ENCODE measurements at regions of chr4 and their contacts with region 1.

Region 1: DNA sequence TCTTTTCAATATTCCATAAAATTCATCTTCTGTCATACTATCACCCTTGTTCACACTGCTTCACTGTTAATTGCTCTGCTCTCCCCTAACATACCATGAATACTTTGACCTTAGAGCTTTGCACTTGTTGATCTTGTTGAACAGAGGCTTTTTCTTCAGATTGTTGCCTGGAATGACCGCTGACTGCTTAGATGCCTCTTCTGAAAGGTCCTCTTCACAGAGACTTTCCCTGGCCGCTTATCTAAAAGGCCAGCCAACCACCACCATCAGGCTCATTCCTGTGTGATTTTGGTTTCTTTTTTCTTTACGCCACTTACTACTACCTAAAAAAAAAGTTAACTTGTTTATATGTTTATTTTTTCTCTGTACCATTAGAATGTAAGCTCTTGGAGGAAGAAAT is 667.7 kb downstream of the STPG2 start:
- DNase-seq: no peak
- H3K4me3 ChIP-seq: no peak overlapping the region
- H3K27ac ChIP-seq: no peak overlapping the region
- H3K4me1 ChIP-seq: no peaks in the 10 kb centered on the region
- H3K27me3 ChIP-seq: no peaks in the 10 kb centered on the region
- CTCF ChIP-seq: no peak
- POLR2A ChIP-seq: no peak

Region 2: DNA sequence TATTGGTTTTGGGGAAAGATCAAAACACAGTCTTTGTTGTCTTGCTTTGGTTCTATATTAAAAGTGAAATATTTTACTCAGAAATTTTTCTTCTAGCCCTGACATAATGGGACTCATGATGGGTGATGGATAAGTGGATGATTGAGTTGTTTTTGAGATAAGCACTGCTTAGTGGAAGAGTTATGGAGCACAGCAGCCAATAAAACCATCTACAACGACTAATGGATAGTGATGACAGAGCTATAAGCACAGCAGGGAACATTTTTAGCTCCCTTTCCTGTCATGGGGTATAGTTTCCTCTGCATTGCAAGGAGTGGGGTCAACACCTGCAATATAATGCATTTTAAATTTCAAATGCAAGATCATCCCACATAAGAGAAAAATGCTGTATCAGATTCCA is 144.7 kb before region 1 on chr4:
- intact Hi-C with region 1: no loop called
- DNase-seq: no peak
- H3K4me3 ChIP-seq: no peak overlapping the region
- H3K27ac ChIP-seq: no peak overlapping the region
- H3K4me1 ChIP-seq: no peaks in the 10 kb centered on the region
- H3K27me3 ChIP-seq: no peaks in the 10 kb centered on the region
- CTCF ChIP-seq: no peak
- POLR2A ChIP-seq: no peak

Region 3: GRCh38 chr4:97614337-97614736 is 138.7 kb after region 1 on chr4:
- intact Hi-C with region 1: no loop called
- DNase-seq: no peak
- H3K4me3 ChIP-seq: no peak overlapping the region
- H3K27ac ChIP-seq: no peak overlapping the region
- H3K4me1 ChIP-seq: no peaks in the 10 kb centered on the region
- H3K27me3 ChIP-seq: no peaks in the 10 kb centered on the region
- CTCF ChIP-seq: no peak
- POLR2A ChIP-seq: no peak

Region 4: GRCh38 chr4:97828646-97829045 is 353.0 kb after region 1 on chr4:
- intact Hi-C with region 1: loop called (anchors 10 kb)
- DNase-seq: no peak
- H3K4me3 ChIP-seq: no peak overlapping the region
- H3K27ac ChIP-seq: no peak overlapping the region
- H3K4me1 ChIP-seq: no peaks in the 10 kb centered on the region
- H3K27me3 ChIP-seq: no peaks in the 10 kb centered on the region
- CTCF ChIP-seq: no peak
- POLR2A ChIP-seq: no peak